Heart left ventricle (tissue), 16 donors: ENCODE measurements at regions of chr15 and their contacts with region 1.

Region 1: DNA sequence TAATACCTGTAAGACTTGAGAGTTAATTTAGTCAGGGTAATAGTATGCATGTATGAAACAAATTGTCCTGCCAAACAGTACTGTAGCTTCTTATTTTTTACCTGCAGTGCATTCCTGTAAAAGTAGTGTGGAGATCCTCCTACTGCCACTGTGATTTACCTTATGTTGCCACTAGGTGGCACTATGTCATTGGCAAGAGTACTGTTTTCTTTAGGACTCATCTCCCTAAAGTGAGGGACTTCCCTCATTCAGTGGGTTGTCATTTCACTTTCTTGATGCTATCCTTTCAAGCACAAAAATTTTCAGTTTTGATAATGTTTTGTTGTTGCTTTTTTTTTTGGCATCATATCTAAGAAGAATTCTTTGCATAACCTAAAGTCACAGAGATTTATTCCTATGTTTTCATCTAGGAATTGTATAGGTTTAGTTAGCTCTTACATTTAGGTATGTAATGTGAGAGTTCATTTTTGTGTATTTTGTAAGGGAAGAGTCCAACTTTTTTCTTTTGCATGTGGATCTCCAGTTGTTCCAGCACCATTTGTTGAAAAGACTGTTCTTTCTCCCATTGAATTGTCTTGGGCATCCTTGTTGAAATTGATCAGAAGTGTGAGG is 105.7 kb downstream of the AKAP13 start:
- DNase-seq: peak in 2 of 5 donors; percentile 49 to 62
- ATAC-seq: peak; percentile 47 to 79 (median 73)
- H3K4me3 ChIP-seq: no peak overlapping the region
- H3K27ac ChIP-seq: peak overlapping the region in 1 of 12 donors; percentile 41
- H3K4me1 ChIP-seq: peaks cover 0 to 80% (median 42%) of the 10 kb centered on the region in 12 donors
- H3K27me3 ChIP-seq: no peaks in the 10 kb centered on the region
- CTCF ChIP-seq: peak; percentile 58 to 92 (median 86)
- POLR2A ChIP-seq: no peak

Region 2: GRCh38 chr15:85534031-85534430 is 48.0 kb after region 1 on chr15:
- intact Hi-C with region 1: no loop called
- DNase-seq: no peak
- ATAC-seq: peak in 3 of 4 donors; percentile 33 to 72 (median 38)
- H3K4me3 ChIP-seq: no peak overlapping the region
- H3K27ac ChIP-seq: peak overlapping the region in 5 of 12 donors; percentile 6 to 80 (median 21)
- H3K4me1 ChIP-seq: peaks cover 3 to 84% (median 43%) of the 10 kb centered on the region in 12 donors
- H3K27me3 ChIP-seq: no peaks in the 10 kb centered on the region
- CTCF ChIP-seq: no peak
- POLR2A ChIP-seq: no peak

Region 3: DNA sequence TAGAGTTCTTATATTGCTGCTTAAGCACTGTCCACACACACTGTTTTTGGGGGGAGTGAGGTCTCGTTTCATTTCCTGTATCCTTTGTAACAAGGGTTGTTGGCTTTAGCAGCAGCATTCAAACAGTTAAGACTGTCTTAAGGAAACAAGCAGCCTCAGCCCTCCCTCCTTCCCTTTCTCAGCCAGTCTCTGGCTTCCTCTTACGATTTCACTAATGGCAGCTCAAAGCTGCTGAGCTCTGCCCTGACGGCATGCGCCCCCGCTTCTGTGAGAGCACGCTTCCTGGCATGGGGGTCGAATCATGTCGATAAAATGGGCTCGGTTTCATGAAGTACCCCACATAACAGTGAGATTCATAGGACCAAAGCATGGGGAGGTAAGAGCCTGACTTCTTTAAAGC is 203.7 kb after region 1 on chr15:
- intact Hi-C with region 1: loop called in 2 of 10 experiments (anchors 10 kb)
- DNase-seq: peak in 3 of 5 donors; percentile 38 to 53 (median 50)
- ATAC-seq: peak; percentile 24 to 63 (median 52)
- H3K4me3 ChIP-seq: peak overlapping the region in 10 of 12 donors; percentile 8 to 52 (median 36)
- H3K27ac ChIP-seq: peak overlapping the region; percentile 4 to 86 (median 58)
- H3K4me1 ChIP-seq: peaks cover 6 to 80% (median 55%) of the 10 kb centered on the region in 12 donors
- H3K27me3 ChIP-seq: no peaks in the 10 kb centered on the region
- CTCF ChIP-seq: no peak
- POLR2A ChIP-seq: no peak

Region 4: DNA sequence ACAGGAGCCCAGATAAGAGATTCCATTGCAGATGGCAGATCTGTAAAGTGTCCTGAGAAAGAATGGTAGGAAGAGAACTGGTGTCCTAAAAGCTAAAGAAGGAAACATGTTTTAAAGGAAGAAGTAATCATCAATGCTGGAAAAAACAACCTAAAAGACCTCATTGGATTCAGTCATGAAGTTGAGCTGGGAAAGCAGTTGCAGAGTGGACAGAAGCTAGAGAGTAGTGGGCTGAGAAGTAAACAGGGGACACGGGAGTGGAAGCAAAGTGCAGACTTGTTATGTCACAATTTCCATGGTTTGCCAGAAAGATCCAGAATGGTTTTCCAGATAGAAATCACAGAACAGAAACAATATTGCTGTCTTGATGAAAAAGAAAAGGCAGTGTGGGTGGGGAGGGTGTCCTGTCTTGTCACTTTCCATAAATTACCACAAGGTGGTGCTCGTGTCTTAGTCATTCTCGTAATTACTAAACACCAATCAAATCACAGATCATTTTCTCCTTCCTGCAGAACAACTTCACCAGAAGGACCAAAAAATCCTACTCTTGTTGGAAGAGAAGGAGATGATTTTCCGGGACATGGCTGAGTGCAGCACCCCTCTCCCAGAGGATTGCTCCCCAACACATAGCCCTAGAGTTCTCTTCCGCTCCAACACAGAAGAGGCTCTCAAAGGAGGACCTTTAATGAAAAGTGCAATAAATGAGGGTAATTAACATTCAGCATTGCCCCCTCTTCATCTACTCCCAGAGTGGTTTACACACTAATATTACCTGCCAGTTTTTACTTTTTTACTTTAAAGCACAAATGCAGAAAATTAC is 244.1 kb after region 1 on chr15:
- intact Hi-C with region 1: loop called in 1 of 10 experiments (anchors 10 kb)
- DNase-seq: peak in 2 of 5 donors; percentile 34 to 45
- ATAC-seq: peak; percentile 18 to 64 (median 57)
- H3K4me3 ChIP-seq: no peak overlapping the region
- H3K27ac ChIP-seq: peak overlapping the region in 5 of 12 donors; percentile 4 to 82 (median 65)
- H3K4me1 ChIP-seq: peaks cover 0 to 41% (median 18%) of the 10 kb centered on the region in 12 donors
- H3K27me3 ChIP-seq: no peaks in the 10 kb centered on the region
- CTCF ChIP-seq: peak; percentile 60 to 83 (median 76)
- POLR2A ChIP-seq: no peak

Region 5: DNA sequence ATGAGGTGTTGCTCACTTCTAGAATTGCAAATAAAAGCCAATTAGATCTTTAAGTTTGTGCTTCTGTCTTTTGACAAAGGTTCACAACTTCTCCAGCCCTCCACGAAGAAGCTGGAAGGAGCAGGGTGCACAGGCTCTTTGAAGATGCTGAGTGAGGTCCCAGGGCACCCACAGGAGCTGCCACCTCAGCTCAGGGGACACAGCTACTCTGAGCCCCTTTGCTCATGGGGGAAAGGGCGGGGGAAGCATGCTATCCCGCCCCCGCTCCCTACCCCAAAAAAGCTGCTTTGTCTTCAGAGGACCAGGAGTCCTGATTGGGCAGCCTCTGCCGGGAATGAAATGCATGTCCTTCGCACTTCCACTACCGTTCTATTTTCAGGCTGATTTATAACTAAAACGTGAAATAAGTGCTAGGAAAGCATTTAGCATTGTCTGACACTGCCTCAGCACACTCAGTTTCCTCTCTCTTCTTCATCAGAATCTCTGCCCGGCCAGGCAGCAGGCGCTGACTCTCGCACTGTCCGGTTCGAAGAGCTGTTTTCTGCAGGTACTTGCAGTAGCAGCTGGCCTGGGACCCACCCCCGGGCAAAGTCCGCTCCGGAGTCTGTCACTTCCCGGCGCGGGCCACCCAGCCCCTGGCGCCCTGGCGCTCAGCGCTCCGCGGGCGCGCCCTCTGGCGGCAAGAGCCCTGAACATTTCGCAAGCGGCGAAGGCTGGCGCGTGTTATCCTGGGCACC is 354.2 kb after region 1 on chr15:
- intact Hi-C with region 1: loop called in 5 of 10 experiments (anchors 5 to 10 kb)
- DNase-seq: peak; percentile 72 to 91 (median 82)
- ATAC-seq: peak; percentile 78 to 95 (median 92)
- H3K4me3 ChIP-seq: peak overlapping the region in 9 of 12 donors; percentile 20 to 55 (median 41)
- H3K27ac ChIP-seq: no peak overlapping the region
- H3K4me1 ChIP-seq: peaks cover 0 to 11% (median 7%) of the 10 kb centered on the region in 12 donors
- H3K27me3 ChIP-seq: no peaks in the 10 kb centered on the region
- CTCF ChIP-seq: peak; percentile 86 to 98 (median 92)
- POLR2A ChIP-seq: no peak